CD4-positive, alpha-beta T cell (primary cell): ENCODE measurements at regions of chr9 and their contacts with region 1.

Region 1: GRCh38 chr9:36400332-36401163 is 479 bp upstream of the RNF38 start:
- DNase-seq: peak; percentile 80 to 96 (median 90)
- ATAC-seq: peak; percentile 74
- H3K4me3 ChIP-seq: peak overlapping the region; percentile 75
- H3K4me3 Mint-ChIP-seq: peak overlapping the region; percentile 92
- H3K27ac ChIP-seq: peak overlapping the region; percentile 88 to 98
- H3K27ac Mint-ChIP-seq: peak overlapping the region; percentile 94
- H3K4me1 ChIP-seq: peaks cover 18% of the 10 kb centered on the region
- H3K4me1 Mint-ChIP-seq: peaks cover 54% of the 10 kb centered on the region
- H3K27me3 ChIP-seq: no peaks in the 10 kb centered on the region
- H3K27me3 Mint-ChIP-seq: no peaks in the 10 kb centered on the region
- CTCF ChIP-seq: no peak

Region 2: GRCh38 chr9:36258208-36258988 is 142.2 kb before region 1 on chr9 and contains the start of gene GNE:
- CTCF ChIA-PET with region 1: no interaction called
- POLR2A ChIA-PET with region 1: no interaction called
- intact Hi-C with region 1: loop called in 1 of 2 experiments (anchors 2 kb)
- DNase-seq: peak; percentile 94 to 98 (median 97)
- ATAC-seq: peak; percentile 89
- H3K4me3 ChIP-seq: peak within 1 kb of the TSS; percentile 66
- H3K4me3 Mint-ChIP-seq: peak within 1 kb of the TSS; percentile 99
- H3K27ac ChIP-seq: peak within 1 kb of the TSS; percentile 88 to 93
- H3K27ac Mint-ChIP-seq: peak within 1 kb of the TSS; percentile 91
- H3K4me1 ChIP-seq: peaks cover 19% of the 10 kb centered on the region
- H3K4me1 Mint-ChIP-seq: peaks cover 6% of the 10 kb centered on the region
- H3K27me3 ChIP-seq: no peaks in the 10 kb centered on the region
- H3K27me3 Mint-ChIP-seq: no peaks in the 10 kb centered on the region
- CTCF ChIP-seq: no peak
- total RNA-seq, gene GNE: 12.5 to 14.6 TPM

Region 3: GRCh38 chr9:36572515-36573418 is 172.2 kb after region 1 on chr9 and contains the start of gene MELK:
- CTCF ChIA-PET with region 1: no interaction called
- POLR2A ChIA-PET with region 1: no interaction called
- intact Hi-C with region 1: loop called (anchors 1 to 5 kb)
- DNase-seq: peak; percentile 67 to 89 (median 80)
- ATAC-seq: peak; percentile 79
- H3K4me3 ChIP-seq: peak within 1 kb of the TSS; percentile 92
- H3K4me3 Mint-ChIP-seq: peak within 1 kb of the TSS; percentile 92
- H3K27ac ChIP-seq: peak within 1 kb of the TSS; percentile 46 to 69
- H3K27ac Mint-ChIP-seq: peak within 1 kb of the TSS; percentile 68
- H3K4me1 ChIP-seq: peaks cover 19% of the 10 kb centered on the region
- H3K4me1 Mint-ChIP-seq: peaks cover 25% of the 10 kb centered on the region
- H3K27me3 ChIP-seq: no peaks in the 10 kb centered on the region
- H3K27me3 Mint-ChIP-seq: no peaks in the 10 kb centered on the region
- CTCF ChIP-seq: no peak
- total RNA-seq, gene MELK: 0.42 to 0.47 TPM

Region 4: GRCh38 chr9:36862206-36863145 is 461.9 kb after region 1 on chr9:
- CTCF ChIA-PET with region 1: no interaction called
- POLR2A ChIA-PET with region 1: no interaction called
- intact Hi-C with region 1: loop called in 1 of 2 experiments (anchors 10 kb)
- DNase-seq: peak in 2 of 14 experiments; percentile 5 to 9
- ATAC-seq: no peak
- H3K4me3 ChIP-seq: no peak overlapping the region
- H3K4me3 Mint-ChIP-seq: no peak overlapping the region
- H3K27ac ChIP-seq: no peak overlapping the region
- H3K27ac Mint-ChIP-seq: no peak overlapping the region
- H3K4me1 ChIP-seq: no peaks in the 10 kb centered on the region
- H3K4me1 Mint-ChIP-seq: no peaks in the 10 kb centered on the region
- H3K27me3 ChIP-seq: peaks cover 0 to under 1% of the 10 kb centered on the region in 2 experiments
- H3K27me3 Mint-ChIP-seq: peaks cover 20% of the 10 kb centered on the region
- CTCF ChIP-seq: no peak